Left lung (tissue), 14 donors: ENCODE measurements at regions of chr6 and their contacts with region 1.

Region 1: GRCh38 chr6:83884523-83884922 is 25.0 kb downstream of the CYB5R4 start:
- DNase-seq: peak in 2 of 4 donors; percentile 26 to 37
- ATAC-seq: peak; percentile 82
- H3K4me3 ChIP-seq: no peak overlapping the region
- H3K27ac ChIP-seq: no peak overlapping the region
- H3K4me1 ChIP-seq: no peaks in the 10 kb centered on the region
- H3K27me3 ChIP-seq: no peaks in the 10 kb centered on the region
- CTCF ChIP-seq: peak; percentile 50 to 71

Region 2: DNA sequence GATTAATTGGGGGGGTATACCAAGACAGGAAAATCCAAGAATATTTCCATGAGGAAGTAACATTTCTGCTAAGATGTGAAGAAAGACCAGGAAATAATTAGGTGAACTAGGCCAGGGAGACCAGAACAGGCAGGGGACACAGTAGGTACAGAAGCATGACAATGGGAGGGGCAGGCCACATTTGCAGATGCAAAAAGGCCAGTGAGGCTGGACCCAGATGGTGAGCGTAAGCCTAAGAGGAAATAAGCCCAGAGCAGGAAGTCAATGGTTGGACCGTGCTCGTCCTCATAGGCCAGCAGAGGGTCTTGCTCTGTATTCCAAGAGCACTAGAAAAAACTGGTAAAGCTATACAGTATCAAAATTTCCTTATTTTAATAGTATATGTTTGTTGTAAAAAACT is 333.6 kb after region 1 on chr6:
- intact Hi-C with region 1: loop called in 1 of 2 experiments (anchors 5 kb)
- DNase-seq: no peak
- ATAC-seq: no peak
- H3K4me3 ChIP-seq: no peak overlapping the region
- H3K27ac ChIP-seq: no peak overlapping the region
- H3K4me1 ChIP-seq: no peaks in the 10 kb centered on the region
- H3K27me3 ChIP-seq: no peaks in the 10 kb centered on the region
- CTCF ChIP-seq: no peak

Region 3: GRCh38 chr6:84227434-84228197 is 343.1 kb after region 1 on chr6 and contains the start of gene CEP162:
- intact Hi-C with region 1: loop called in 1 of 2 experiments (anchors 5 kb)
- DNase-seq: peak; percentile 93 to 98 (median 94)
- ATAC-seq: peak; percentile 99
- H3K4me3 ChIP-seq: peak within 1 kb of the TSS; percentile 68 to 72
- H3K27ac ChIP-seq: peak within 1 kb of the TSS; percentile 88
- H3K4me1 ChIP-seq: peaks cover 5 to 13% of the 10 kb centered on the region in 2 donors
- H3K27me3 ChIP-seq: peaks cover 0 to 20% of the 10 kb centered on the region in 2 donors
- CTCF ChIP-seq: peak; percentile 49 to 60
- polyA plus RNA-seq, gene CEP162: 15.8 to 26.4 (median 21.7) TPM